GM12878 (cell line): ENCODE measurements at regions of chr11 and their contacts with region 1.

Region 1: DNA sequence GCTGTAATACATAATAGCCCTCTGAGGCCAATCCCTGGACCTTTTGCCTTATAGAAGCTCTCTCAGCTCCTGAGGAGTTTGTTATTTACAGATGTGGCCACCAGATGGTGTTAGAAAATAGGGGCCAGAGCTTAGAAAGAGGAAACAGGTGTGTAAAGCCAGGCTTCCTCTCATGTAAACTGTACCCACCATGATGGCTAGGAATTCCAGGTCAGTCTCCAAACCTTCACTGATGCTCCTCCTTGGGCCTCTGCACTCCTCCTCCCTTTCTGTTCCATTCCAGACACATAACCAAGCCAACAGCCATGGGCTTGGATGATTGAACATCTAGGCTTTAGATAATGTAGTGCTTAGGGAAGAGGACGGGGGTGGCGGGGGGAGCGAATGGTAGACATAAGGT is 39.7 kb downstream of the USP35 start:
- DNase-seq: peak; percentile 51
- ATAC-seq: peak; percentile 88
- H3K4me3 ChIP-seq: no peak overlapping the region
- H3K27ac ChIP-seq: peak overlapping the region; percentile 75
- H3K4me1 ChIP-seq: peaks cover 37% of the 10 kb centered on the region
- H3K27me3 ChIP-seq: no peaks in the 10 kb centered on the region
- CTCF ChIP-seq: peak; percentile 52 to 69 (median 64); a peak in 5 of 6 replicates
- EP300 ChIP-seq: no peak
- POLR2A ChIP-seq: no peak
- RAD21 ChIP-seq: peak; percentile 99

Region 2: DNA sequence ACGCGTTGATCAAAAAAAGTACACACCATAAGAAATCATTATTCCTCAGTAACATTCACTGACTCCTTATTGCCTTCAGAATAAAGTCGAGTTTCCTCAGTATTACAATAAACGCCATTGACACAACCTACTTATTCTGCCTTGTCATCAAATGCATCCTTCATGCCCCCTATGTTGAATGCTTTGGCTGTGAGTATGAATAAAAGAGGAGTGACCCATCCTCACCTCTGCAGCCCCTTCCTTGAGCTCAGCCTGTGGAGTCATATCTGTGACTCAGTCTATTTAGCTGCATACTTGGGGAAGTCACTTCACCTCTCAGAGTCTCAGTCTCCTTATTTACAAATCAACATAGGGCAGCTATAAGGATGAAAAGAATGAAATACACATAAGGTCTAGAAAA is 25.3 kb after region 1 on chr11:
- CTCF ChIA-PET with region 1: interaction called, 10 read pairs
- POLR2A ChIA-PET with region 1: no interaction called
- RAD21 ChIA-PET with region 1: no interaction called
- SMC1A ChIA-PET with region 1: interaction called, 3 read pairs
- in situ Hi-C with region 1: no loop called
- intact Hi-C with region 1: no loop called
- DNase-seq: no peak
- ATAC-seq: no peak
- H3K4me3 ChIP-seq: no peak overlapping the region
- H3K27ac ChIP-seq: no peak overlapping the region
- H3K4me1 ChIP-seq: no peaks in the 10 kb centered on the region
- H3K27me3 ChIP-seq: no peaks in the 10 kb centered on the region
- CTCF ChIP-seq: no peak
- EP300 ChIP-seq: no peak
- POLR2A ChIP-seq: no peak
- RAD21 ChIP-seq: no peak

Region 3: GRCh38 chr11:78416305-78417178 is 188.1 kb after region 1 on chr11:
- CTCF ChIA-PET with region 1: interaction called, 58 read pairs
- POLR2A ChIA-PET with region 1: no interaction called
- RAD21 ChIA-PET with region 1: interaction called, 36 read pairs
- SMC1A ChIA-PET with region 1: interaction called, 20 read pairs
- in situ Hi-C with region 1: no loop called
- intact Hi-C with region 1: loop called (anchors 1 kb)
- DNase-seq: no peak
- ATAC-seq: peak; percentile 63
- H3K4me3 ChIP-seq: peak overlapping the region; percentile 74
- H3K27ac ChIP-seq: peak overlapping the region; percentile 56
- H3K4me1 ChIP-seq: peaks cover 22% of the 10 kb centered on the region
- H3K27me3 ChIP-seq: no peaks in the 10 kb centered on the region
- CTCF ChIP-seq: peak; percentile 72 to 75 (median 72)
- EP300 ChIP-seq: no peak
- POLR2A ChIP-seq: peak; percentile 62; the same call in 1 of the 2 replicates
- RAD21 ChIP-seq: peak; percentile 72

Region 4: GRCh38 chr11:78432058-78432515 is 203.6 kb after region 1 on chr11:
- CTCF ChIA-PET with region 1: interaction called, 18 read pairs
- POLR2A ChIA-PET with region 1: interaction called, 3 read pairs
- RAD21 ChIA-PET with region 1: interaction called, 5 read pairs
- SMC1A ChIA-PET with region 1: interaction called, 13 read pairs
- in situ Hi-C with region 1: no loop called
- intact Hi-C with region 1: loop called (anchors 1 kb)
- DNase-seq: no peak
- ATAC-seq: no peak
- H3K4me3 ChIP-seq: no peak overlapping the region
- H3K27ac ChIP-seq: no peak overlapping the region
- H3K4me1 ChIP-seq: peaks cover 27% of the 10 kb centered on the region
- H3K27me3 ChIP-seq: no peaks in the 10 kb centered on the region
- CTCF ChIP-seq: peak in 2 of 3 experiments; percentile 35 to 41; a peak in 2 of 6 replicates
- EP300 ChIP-seq: no peak
- POLR2A ChIP-seq: no peak
- RAD21 ChIP-seq: peak; percentile 38; the same call in 1 of the 2 replicates

Region 5: DNA sequence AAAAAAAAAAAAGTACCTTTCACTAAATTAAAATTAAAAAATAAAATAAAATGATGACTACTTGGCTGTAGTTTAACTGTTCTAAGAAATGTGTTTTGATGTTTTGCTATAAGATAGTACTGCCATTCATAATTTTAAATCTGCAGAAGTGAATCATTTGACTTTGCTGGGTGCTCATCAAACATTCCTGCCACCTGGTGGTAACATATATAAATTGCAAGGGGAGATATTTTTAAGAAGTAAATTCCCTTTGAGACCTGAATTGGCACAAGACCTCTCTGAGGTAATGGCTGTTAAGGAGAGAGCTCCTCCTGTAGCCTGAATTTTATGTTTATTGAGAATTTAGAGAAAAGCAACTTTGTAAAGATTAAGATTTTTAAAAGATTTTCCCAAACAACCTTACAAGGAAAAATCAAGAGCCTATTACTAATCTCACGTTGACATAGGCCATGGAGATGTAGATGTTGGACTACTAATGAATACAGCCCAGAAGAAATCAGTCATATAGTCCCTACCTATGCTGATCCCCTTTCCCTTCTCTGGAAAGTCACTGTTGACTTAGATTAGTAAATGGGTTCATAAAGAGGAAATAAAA is 358.1 kb after region 1 on chr11:
- CTCF ChIA-PET with region 1: interaction called, 20 read pairs
- POLR2A ChIA-PET with region 1: interaction called, 3 read pairs
- RAD21 ChIA-PET with region 1: interaction called, 6 read pairs
- SMC1A ChIA-PET with region 1: interaction called, 5 read pairs
- in situ Hi-C with region 1: no loop called
- intact Hi-C with region 1: no loop called
- DNase-seq: no peak
- ATAC-seq: no peak
- H3K4me3 ChIP-seq: no peak overlapping the region
- H3K27ac ChIP-seq: no peak overlapping the region
- H3K4me1 ChIP-seq: no peaks in the 10 kb centered on the region
- H3K27me3 ChIP-seq: no peaks in the 10 kb centered on the region; a peak in 1 of 4 replicates
- CTCF ChIP-seq: peak; percentile 36 to 58 (median 42); a peak in 5 of 6 replicates
- EP300 ChIP-seq: no peak
- POLR2A ChIP-seq: no peak
- RAD21 ChIP-seq: peak; percentile 51